Activated CD8-positive, alpha-beta memory T cell treated with anti-CD3 and anti-CD28 coated beads, Interleukin-2, amount 10 ng/mL, durations not matched to agents 7 days and 5 days (primary cell): ENCODE measurements at regions of chr1 and their contacts with region 1.

Region 1: DNA sequence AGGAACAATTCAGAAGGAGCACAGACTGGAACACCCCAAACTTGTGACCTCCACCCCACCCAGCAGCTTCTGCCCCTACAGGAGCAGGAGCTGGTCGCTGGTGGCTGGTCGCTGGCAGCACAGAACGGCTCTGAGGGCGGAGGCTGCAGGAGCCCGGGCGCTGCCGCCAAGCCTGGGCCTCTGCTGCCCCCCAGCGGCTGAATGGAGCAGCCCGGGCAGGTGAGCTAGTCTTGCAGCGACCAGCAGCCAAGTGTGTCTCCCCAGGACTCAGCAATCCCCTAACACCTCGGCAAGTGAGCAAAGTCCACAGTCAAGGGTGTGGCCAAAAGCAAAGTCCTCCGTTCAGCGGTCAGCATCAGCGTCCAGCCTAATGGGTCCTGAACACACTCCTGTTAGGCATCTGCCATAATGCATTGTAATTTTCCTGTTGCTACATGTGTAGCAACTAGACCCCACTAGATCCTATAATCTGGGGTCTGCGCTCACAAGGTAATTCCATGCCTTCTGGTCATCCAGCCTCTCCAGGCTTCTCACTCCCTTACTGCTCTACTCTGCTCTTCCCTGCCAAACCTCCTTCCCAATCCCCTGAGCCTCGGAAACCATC is 12.1 kb upstream of the GJB5 start:
- DNase-seq: peak; percentile 81
- ATAC-seq: peak; percentile 95
- H3K4me3 Mint-ChIP-seq: no peak overlapping the region
- H3K27ac Mint-ChIP-seq: no peak overlapping the region
- H3K4me1 Mint-ChIP-seq: no peaks in the 10 kb centered on the region
- H3K27me3 Mint-ChIP-seq: peaks cover 5% of the 10 kb centered on the region

Region 2: DNA sequence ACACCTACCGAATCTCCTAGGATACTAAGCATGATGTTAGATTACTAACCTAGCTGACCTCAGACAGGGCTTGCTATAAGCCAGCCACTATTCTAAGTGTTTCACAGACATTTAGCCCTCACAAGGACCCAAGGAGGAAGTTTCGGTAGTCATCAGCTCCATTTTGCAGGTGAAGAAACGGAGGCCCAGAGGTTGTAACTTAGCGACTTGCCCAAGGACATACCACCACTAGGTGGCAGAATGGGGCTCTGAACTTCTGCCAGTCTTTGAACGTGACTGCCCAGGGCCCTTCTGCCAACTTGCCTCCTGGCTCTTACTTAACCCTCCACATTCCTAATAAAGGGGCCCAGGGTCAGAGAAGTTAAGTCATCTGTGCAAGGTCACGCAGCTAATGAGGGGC is 282.6 kb before region 1 on chr1:
- CTCF ChIA-PET with region 1: interaction called, 20 read pairs
- DNase-seq: peak; percentile 58
- ATAC-seq: no peak
- H3K4me3 Mint-ChIP-seq: no peak overlapping the region
- H3K27ac Mint-ChIP-seq: no peak overlapping the region
- H3K4me1 Mint-ChIP-seq: no peaks in the 10 kb centered on the region
- H3K27me3 Mint-ChIP-seq: no peaks in the 10 kb centered on the region

Region 3: GRCh38 chr1:34726861-34727260 is 15.9 kb before region 1 on chr1:
- CTCF ChIA-PET with region 1: interaction called, 16 read pairs
- DNase-seq: no peak
- ATAC-seq: no peak
- H3K4me3 Mint-ChIP-seq: no peak overlapping the region
- H3K27ac Mint-ChIP-seq: no peak overlapping the region
- H3K4me1 Mint-ChIP-seq: no peaks in the 10 kb centered on the region
- H3K27me3 Mint-ChIP-seq: peaks cover 21% of the 10 kb centered on the region